ENCODE measurements at regions of chr5 and their contacts with region 1.

Region 1: GRCh38 chr5:134176511-134177368 is at the start of gene SKP1:
- DNase-seq: peak; percentile 79 to 93 (median 85)
- ATAC-seq: peak; percentile 88
- H3K4me3 ChIP-seq: peak within 1 kb of the TSS; percentile 98 to 99
- H3K4me3 Mint-ChIP-seq: peak within 1 kb of the TSS; percentile 98
- H3K27ac ChIP-seq: peak within 1 kb of the TSS; percentile 98
- H3K27ac Mint-ChIP-seq: peak within 1 kb of the TSS; percentile 99
- H3K4me1 ChIP-seq: peaks cover 31% of the 10 kb centered on the region
- H3K4me1 Mint-ChIP-seq: peaks cover 34% of the 10 kb centered on the region
- H3K27me3 ChIP-seq: no peaks in the 10 kb centered on the region
- H3K27me3 Mint-ChIP-seq: no peaks in the 10 kb centered on the region
- CTCF ChIP-seq: no peak
- total RNA-seq, gene SKP1: 290 to 301 TPM

Region 2: GRCh38 chr5:134124289-134125038 is 52.3 kb before region 1 on chr5:
- CTCF ChIA-PET with region 1: no interaction called
- POLR2A ChIA-PET with region 1: interaction called, 6 read pairs
- intact Hi-C with region 1: loop called in 1 of 2 experiments (anchors 5 kb)
- DNase-seq: peak in 5 of 9 experiments; percentile 67 to 85 (median 71)
- ATAC-seq: peak; percentile 28
- H3K4me3 ChIP-seq: peak overlapping the region; percentile 40 to 52
- H3K4me3 Mint-ChIP-seq: peak overlapping the region; percentile 95
- H3K27ac ChIP-seq: peak overlapping the region; percentile 64 to 83
- H3K27ac Mint-ChIP-seq: peak overlapping the region; percentile 96
- H3K4me1 ChIP-seq: peaks cover 91% of the 10 kb centered on the region
- H3K4me1 Mint-ChIP-seq: peaks cover 95% of the 10 kb centered on the region
- H3K27me3 ChIP-seq: no peaks in the 10 kb centered on the region
- H3K27me3 Mint-ChIP-seq: no peaks in the 10 kb centered on the region
- CTCF ChIP-seq: no peak

Region 3: GRCh38 chr5:134161513-134162395 is 15.0 kb before region 1 on chr5:
- CTCF ChIA-PET with region 1: no interaction called
- POLR2A ChIA-PET with region 1: interaction called, 28 read pairs
- intact Hi-C with region 1: loop called (anchors 1 to 2 kb)
- DNase-seq: no peak
- ATAC-seq: no peak
- H3K4me3 ChIP-seq: no peak overlapping the region
- H3K4me3 Mint-ChIP-seq: no peak overlapping the region
- H3K27ac ChIP-seq: no peak overlapping the region
- H3K27ac Mint-ChIP-seq: no peak overlapping the region
- H3K4me1 ChIP-seq: peaks cover 9% of the 10 kb centered on the region
- H3K4me1 Mint-ChIP-seq: peaks cover 47% of the 10 kb centered on the region
- H3K27me3 ChIP-seq: no peaks in the 10 kb centered on the region
- H3K27me3 Mint-ChIP-seq: no peaks in the 10 kb centered on the region
- CTCF ChIP-seq: no peak

Measured in CD8-positive, alpha-beta T cell (primary cell).